Activated T-helper 1 cell treated with anti-CD3 and anti-CD28 coated beads, Interleukin-12 subunit alpha, Interleukin-12 subunit beta, Interleukin-2, Interleukin-4 antibody, amounts not matched to agents 30 ng/mL and 10 ng/mL and 1 ng/mL, durations not matched to agents 14 hours and 24 hours and 36 hours (primary cell): ENCODE measurements at regions of chr7 and their contacts with region 1.

Region 1: GRCh38 chr7:157357129-157358040 is 20.6 kb downstream of the DNAJB6 start:
- DNase-seq: no peak
- H3K4me3 Mint-ChIP-seq: no peak overlapping the region
- H3K27ac Mint-ChIP-seq: peak overlapping the region; percentile 14
- H3K4me1 Mint-ChIP-seq: peaks cover 62% of the 10 kb centered on the region
- H3K27me3 Mint-ChIP-seq: no peaks in the 10 kb centered on the region

Region 2: DNA sequence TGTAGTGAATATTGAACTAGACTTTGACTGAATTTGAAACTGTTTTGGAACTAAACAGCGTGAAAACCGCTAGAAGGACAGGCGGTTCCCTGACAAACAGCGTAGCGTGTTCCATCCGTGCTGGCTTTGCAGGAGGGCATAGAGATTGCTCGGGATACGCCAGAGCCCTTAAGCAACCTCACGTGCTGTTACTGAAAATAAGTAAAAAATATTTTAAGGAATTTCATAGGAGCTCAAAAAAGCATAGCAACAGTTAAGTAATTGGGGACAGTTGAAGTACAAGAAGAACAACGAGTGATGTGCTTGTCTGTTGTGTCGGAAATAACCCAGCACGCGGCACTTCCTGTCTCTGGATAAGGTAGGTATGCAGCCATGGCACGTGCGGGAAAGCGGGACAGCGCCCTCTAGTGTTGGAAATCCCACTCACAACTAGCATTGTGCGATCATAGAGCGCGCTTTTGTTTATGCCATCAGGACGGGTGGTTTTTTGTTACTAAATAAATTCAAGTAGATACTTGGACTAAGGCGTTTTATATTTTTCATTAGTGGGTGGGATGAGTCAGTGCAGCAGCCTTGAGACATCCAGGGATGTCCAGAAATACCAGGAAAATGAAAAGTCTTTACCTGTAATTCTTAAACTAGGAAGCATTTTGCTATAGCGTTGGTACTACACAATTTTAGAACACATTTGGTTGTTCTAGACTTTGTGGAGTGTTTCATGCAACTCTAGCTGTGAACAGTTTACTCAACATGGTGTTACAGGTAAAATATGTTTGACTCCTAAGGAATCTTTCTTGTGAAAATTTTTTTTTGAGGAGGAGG is 29.8 kb after region 1 on chr7:
- intact Hi-C with region 1: loop called (anchors 2 kb)
- DNase-seq: peak; percentile 78
- H3K4me3 Mint-ChIP-seq: no peak overlapping the region
- H3K27ac Mint-ChIP-seq: peak overlapping the region; percentile 57
- H3K4me1 Mint-ChIP-seq: peaks cover 38% of the 10 kb centered on the region
- H3K27me3 Mint-ChIP-seq: no peaks in the 10 kb centered on the region